ENCODE measurements at regions of chr12 and their contacts with region 1.

Region 1: DNA sequence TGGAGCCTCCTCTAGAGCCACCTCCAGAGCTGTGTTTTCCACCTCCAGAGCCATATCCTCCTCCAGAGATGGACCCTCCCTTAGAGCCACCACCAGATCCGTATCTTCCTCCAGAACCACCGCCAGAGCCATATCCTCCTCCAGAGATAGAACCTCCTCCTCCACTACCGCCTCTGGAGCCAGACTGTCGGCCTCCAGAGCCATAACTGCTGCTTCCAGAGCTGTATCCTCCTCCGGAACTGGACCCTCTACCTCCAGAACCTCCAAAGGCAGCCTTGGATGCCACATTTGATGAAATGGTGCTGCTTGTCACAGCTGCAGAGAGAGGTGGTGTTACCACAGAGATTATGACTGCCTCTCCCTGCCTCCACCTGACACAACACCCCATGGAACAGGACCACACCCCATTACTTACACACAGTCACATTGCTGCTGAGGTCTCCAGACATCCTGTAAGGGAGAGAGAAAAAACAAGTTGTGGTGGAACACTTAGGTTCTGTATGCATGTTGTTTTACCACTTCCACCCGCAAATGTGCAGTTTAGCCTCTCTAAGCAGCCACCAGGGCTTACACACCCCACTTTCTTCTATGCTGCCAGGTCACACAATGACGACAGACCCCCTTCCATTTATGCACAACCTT is 6.8 kb downstream of the KRT2 start:
- DNase-seq: no peak

Region 2: GRCh38 chr12:51666696-51667095 is 978.5 kb before region 1 on chr12:
- intact Hi-C with region 1: loop called in 1 of 2 experiments (anchors 10 kb)
- DNase-seq: no peak

Measured in posterior vena cava (tissue), 2 donors.